IMR-90 (cell line): ENCODE measurements at regions of chr2 and their contacts with region 1.

Region 1: DNA sequence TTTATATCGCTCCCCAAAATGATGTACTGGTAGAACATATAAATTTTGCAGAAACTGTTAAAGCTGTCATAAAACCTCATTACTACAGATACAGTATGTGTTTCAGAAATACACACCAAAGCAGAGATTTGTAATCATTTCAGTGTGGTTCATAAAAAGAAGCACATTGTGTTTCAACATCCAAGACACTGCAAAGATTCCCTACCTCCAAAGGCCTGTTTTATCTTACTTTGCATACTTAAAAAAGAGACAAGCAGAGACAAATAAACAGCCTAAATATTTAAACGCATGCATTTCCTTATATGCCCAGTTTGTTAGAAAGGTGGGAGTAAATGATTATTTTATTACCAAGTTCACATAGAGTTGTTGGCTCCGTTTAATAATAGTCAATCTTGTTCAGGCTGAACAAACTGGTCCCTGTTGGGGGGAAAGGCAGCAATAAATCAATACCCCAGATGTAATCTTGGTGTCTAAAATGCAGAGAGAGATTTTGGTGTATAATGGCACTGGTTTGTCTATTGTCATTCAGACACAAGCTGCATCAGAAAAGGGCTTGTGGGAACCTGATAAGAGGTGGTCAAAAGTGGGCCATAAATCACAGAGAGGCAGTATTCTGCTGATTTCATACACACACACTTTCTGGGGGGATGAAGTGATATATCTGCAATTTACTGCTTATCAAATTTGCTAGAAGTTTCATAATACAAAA is 321.4 kb upstream of the ETAA1 start:
- DNase-seq: no peak
- ATAC-seq: no peak
- H3K4me3 ChIP-seq: no peak overlapping the region
- H3K27ac ChIP-seq: no peak overlapping the region
- H3K4me1 ChIP-seq: peaks cover 2% of the 10 kb centered on the region; the same call in 1 of the 2 replicates
- H3K27me3 ChIP-seq: no peaks in the 10 kb centered on the region
- CTCF ChIP-seq: no peak
- POLR2A ChIP-seq: no peak
- RAD21 ChIP-seq: no peak

Region 2: DNA sequence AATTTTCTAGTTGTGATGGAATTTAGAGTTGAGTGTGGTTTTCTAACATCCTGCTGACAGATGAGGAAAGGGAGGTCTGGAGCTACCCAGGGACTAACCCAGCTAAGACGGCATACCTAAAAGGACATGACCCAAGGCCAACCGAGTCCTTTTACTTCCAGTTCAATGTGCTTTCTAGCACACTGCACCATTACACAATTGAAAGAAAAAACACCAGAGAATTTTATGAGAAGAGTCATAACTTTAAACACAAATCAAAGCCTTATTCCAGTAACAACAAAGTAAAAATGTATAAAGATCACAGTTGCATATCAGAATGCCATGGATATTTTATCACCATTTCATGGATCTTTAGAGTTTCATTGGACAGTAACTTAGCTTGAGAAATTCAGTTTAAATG is 160.4 kb before region 1 on chr2:
- CTCF ChIA-PET with region 1: no interaction called
- POLR2A ChIA-PET with region 1: interaction called, 13 read pairs
- dilution Hi-C with region 1: no loop called
- in situ Hi-C with region 1: no loop called
- intact Hi-C with region 1: no loop called
- DNase-seq: peak; percentile 20
- ATAC-seq: peak; percentile 60
- H3K4me3 ChIP-seq: no peak overlapping the region
- H3K27ac ChIP-seq: no peak overlapping the region
- H3K4me1 ChIP-seq: peaks cover 6% of the 10 kb centered on the region
- H3K27me3 ChIP-seq: no peaks in the 10 kb centered on the region
- CTCF ChIP-seq: no peak
- POLR2A ChIP-seq: no peak
- RAD21 ChIP-seq: no peak